Endothelial cell of umbilical vein (primary cell): ENCODE measurements at regions of chr20 and their contacts with region 1.

Region 1: GRCh38 chr20:19815553-19815991 is 57.5 kb downstream of the RIN2 start:
- DNase-seq: peak; percentile 98
- H3K4me3 ChIP-seq: no peak overlapping the region
- H3K27ac ChIP-seq: peak overlapping the region; percentile 96
- H3K4me1 ChIP-seq: peaks cover 59% of the 10 kb centered on the region
- H3K27me3 ChIP-seq: no peaks in the 10 kb centered on the region
- CTCF ChIP-seq: no peak
- POLR2A ChIP-seq: peak; percentile 20

Region 2: DNA sequence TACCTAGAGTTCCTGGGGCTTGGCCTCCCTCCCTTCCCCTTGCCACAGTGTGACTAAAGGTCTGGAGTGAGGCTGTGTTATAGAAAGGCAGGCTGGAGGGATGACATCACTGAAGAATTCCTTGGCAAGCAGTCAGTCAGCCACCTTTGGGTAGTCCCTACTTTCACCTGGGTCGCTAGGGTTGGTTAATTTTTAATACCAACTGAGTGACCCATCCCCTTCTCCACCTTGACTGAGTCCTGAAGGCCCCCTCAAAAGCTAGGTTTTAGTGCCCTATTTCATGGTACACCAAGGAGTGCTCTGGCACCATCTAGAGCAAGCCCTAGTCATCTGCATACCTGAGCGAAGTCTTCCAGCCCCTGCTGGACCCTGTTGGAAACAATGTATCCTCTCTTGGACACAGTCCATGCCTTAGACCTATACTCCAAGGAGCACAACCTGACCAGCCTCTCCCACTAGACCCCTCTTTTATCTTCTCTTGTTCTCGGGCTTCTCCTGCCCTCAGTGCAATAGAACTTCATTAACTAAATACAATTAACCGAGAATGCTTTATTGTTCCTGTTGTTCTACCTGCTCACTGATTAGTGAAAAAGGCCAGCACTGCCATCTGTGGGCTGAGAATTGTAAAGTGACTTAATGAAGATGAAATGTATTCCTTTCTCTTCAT is 12.9 kb before region 1 on chr20:
- CTCF ChIA-PET with region 1: interaction called, 3 read pairs
- POLR2A ChIA-PET with region 1: interaction called, 3 read pairs
- dilution Hi-C with region 1: no loop called
- intact Hi-C with region 1: loop called (anchors 2 kb)
- DNase-seq: peak; percentile 26
- H3K4me3 ChIP-seq: no peak overlapping the region
- H3K27ac ChIP-seq: peak overlapping the region; percentile 22
- H3K4me1 ChIP-seq: peaks cover 30% of the 10 kb centered on the region
- H3K27me3 ChIP-seq: no peaks in the 10 kb centered on the region
- CTCF ChIP-seq: peak in 1 of 2 donors; percentile 7
- POLR2A ChIP-seq: no peak

Region 3: GRCh38 chr20:19828232-19828631 is 12.7 kb after region 1 on chr20:
- CTCF ChIA-PET with region 1: interaction called, 30 read pairs
- POLR2A ChIA-PET with region 1: interaction called, 9 read pairs
- dilution Hi-C with region 1: no loop called
- intact Hi-C with region 1: no loop called
- DNase-seq: peak; percentile 70
- H3K4me3 ChIP-seq: no peak overlapping the region
- H3K27ac ChIP-seq: peak overlapping the region; percentile 57
- H3K4me1 ChIP-seq: peaks cover 23% of the 10 kb centered on the region
- H3K27me3 ChIP-seq: no peaks in the 10 kb centered on the region
- CTCF ChIP-seq: peak; percentile 14 to 22
- POLR2A ChIP-seq: no peak

Region 4: DNA sequence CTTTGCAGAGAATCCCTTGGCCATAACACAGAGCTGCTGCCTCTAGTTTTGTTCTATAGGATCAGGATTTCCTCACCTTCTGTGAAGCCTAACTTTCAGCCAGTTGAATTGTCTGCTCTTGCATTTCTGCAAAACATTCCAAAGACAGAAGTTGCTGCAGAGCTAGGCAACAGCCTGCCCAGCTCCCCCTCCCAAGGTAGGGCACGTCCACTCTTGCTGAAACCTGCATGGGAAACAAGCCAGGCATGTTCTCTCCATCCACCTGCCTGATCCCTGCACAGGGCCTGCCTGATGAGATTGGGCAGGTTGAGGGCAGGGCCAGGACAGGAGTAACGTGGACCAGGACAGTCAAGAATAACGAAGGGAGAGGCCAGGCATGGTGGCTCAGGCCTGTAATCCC is 142.6 kb after region 1 on chr20:
- CTCF ChIA-PET with region 1: no interaction called
- POLR2A ChIA-PET with region 1: no interaction called
- dilution Hi-C with region 1: no loop called
- intact Hi-C with region 1: no loop called
- DNase-seq: no peak
- H3K4me3 ChIP-seq: no peak overlapping the region
- H3K27ac ChIP-seq: no peak overlapping the region
- H3K4me1 ChIP-seq: no peaks in the 10 kb centered on the region
- H3K27me3 ChIP-seq: no peaks in the 10 kb centered on the region
- CTCF ChIP-seq: no peak
- POLR2A ChIP-seq: no peak